Spleen (tissue), 13 donors: ENCODE measurements at regions of chr9 and their contacts with region 1.

Region 1: DNA sequence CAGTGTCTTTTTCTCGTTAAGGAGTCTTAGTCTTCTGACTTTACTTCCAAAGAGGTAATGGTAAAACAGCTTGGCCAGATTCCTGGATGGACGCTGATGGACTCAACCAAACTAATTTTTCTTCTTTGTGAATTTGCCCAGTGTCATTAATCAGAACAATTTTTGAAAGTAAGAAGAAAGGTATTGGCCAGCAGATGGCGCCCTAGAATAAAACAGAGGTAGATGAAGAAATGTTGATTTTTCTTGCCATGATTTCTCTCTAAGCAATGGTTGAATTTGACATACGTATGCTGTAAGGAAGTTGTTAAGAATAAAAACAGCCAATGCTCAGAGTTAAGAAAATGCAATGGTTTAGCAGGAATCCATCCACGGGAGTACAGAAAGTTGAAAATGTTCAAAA is 500.0 kb downstream of the DIRAS2 start:
- DNase-seq: no peak
- H3K4me3 ChIP-seq: no peak overlapping the region
- H3K27ac ChIP-seq: no peak overlapping the region
- H3K4me1 ChIP-seq: peaks cover 0 to 14% (median 0%) of the 10 kb centered on the region in 6 donors
- H3K27me3 ChIP-seq: peaks cover 0 to 22% (median 0%) of the 10 kb centered on the region in 7 donors
- CTCF ChIP-seq: peak in 10 of 11 experiments; percentile 26 to 67 (median 58)
- POLR2A ChIP-seq: no peak

Region 2: DNA sequence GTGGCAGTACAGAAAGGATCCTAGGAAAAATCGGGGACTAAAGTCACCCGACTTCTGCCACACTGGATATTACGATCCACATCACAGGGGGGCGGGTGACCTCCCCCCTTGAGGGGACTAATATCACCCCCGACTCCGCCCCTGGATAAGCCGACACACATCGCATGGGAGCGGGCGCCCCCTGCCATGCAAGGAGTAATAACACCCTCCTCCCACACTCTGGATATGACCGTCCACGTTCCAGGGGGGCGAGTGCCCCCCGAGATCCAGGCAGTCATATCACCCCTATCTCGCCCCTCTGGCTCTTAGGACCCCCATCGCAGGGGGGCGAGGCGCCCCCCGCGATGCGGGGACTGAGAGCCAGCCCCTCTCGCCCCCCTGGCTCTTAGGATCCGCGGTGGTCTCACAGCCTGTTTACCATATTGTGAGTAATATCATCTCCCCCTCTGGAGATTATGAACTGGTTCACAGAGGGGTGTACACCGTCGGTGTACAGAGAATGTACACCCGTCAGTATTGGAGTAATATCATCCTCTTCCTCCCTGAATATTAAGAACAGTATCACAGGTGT is 77.1 kb after region 1 on chr9:
- intact Hi-C with region 1: loop called (anchors 5 kb)
- DNase-seq: no peak
- H3K4me3 ChIP-seq: peak overlapping the region in 1 of 8 donors; percentile 13
- H3K27ac ChIP-seq: no peak overlapping the region
- H3K4me1 ChIP-seq: peaks cover 0 to 8% (median 4%) of the 10 kb centered on the region in 6 donors
- H3K27me3 ChIP-seq: peaks cover 0 to 27% (median 3%) of the 10 kb centered on the region in 7 donors
- CTCF ChIP-seq: peak in 9 of 11 experiments; percentile 30 to 63 (median 55)
- POLR2A ChIP-seq: no peak